OCI-LY7 (cell line): ENCODE measurements at regions of chr7 and their contacts with region 1.

Region 1: DNA sequence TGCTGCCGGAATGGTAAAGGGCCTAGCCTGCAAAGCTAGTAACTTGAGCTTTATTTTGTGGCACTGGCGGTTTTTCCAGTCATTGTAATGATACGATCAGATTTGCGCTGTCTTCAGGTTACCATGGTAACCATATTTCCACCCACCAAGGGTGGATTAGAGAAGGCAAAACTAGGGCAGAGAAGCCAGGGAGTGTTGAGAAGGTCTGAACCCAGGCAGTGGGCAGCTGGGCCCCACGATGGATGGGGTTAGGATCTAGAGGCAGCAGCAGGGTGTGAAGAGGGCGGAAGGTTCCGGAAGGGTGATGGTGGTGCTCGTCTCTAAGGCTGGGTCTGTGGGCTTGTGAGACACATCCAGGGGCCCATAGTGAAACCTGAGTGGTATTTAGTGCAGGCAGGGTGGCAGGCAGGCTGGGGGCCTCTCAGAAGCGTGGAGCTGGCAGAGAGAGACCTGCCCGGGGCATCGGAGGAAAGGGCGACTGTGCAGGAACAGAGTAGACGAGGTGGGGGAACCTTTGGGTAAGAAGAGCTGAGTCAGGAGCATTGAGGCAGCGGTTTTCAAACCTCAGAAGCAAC is 87.9 kb upstream of the GTF2I start:
- DNase-seq: no peak
- H3K4me3 ChIP-seq: no peak overlapping the region
- H3K27ac ChIP-seq: no peak overlapping the region
- H3K4me1 ChIP-seq: peaks cover 11% of the 10 kb centered on the region
- CTCF ChIP-seq: no peak

Region 2: GRCh38 chr7:74417419-74417971 is 152.1 kb before region 1 on chr7:
- CTCF ChIA-PET with region 1: no interaction called
- POLR2A ChIA-PET with region 1: no interaction called
- intact Hi-C with region 1: loop called (anchors 1 kb)
- DNase-seq: peak; percentile 62
- H3K4me3 ChIP-seq: no peak overlapping the region
- H3K27ac ChIP-seq: no peak overlapping the region
- H3K4me1 ChIP-seq: no peaks in the 10 kb centered on the region
- CTCF ChIP-seq: peak; percentile 95

Region 3: GRCh38 chr7:74449809-74450397 is 119.7 kb before region 1 on chr7:
- CTCF ChIA-PET with region 1: no interaction called
- POLR2A ChIA-PET with region 1: no interaction called
- intact Hi-C with region 1: loop called (anchors 1 kb)
- DNase-seq: peak; percentile 76
- H3K4me3 ChIP-seq: no peak overlapping the region
- H3K27ac ChIP-seq: no peak overlapping the region
- H3K4me1 ChIP-seq: no peaks in the 10 kb centered on the region
- CTCF ChIP-seq: peak; percentile 86